ENCODE measurements at regions of chr2 and their contacts with region 1.

Region 1: DNA sequence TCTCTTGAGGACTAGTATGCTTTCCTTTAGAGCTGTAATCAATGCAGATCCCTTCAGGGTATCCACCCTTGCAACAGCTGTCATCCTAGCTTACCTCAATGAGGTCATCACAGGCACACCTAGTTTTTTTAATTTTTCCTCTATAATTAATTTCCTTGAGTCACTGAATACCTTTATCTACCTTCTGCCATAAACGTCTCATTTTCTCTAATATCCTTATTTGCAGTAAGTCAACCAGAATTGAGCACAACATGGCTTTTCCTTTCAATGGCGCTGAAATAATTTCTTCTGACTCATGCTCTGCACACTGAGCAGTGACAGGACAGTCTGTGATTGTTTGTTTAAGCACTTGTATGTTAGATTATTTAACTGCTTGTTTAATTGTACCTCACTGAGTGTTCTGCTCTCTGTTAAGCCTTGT is 49.4 kb downstream of the ETAA1 start:
- DNase-seq: no peak
- H3K4me3 ChIP-seq: no peak overlapping the region
- H3K27ac ChIP-seq: no peak overlapping the region
- H3K4me1 ChIP-seq: no peaks in the 10 kb centered on the region
- H3K27me3 ChIP-seq: no peaks in the 10 kb centered on the region
- CTCF ChIP-seq: no peak

Region 2: GRCh38 chr2:67290451-67291290 is 155.8 kb before region 1 on chr2:
- intact Hi-C with region 1: loop called (anchors 5 kb)
- DNase-seq: no peak
- H3K4me3 ChIP-seq: no peak overlapping the region
- H3K27ac ChIP-seq: no peak overlapping the region
- H3K4me1 ChIP-seq: peaks cover 0 to 13% (median 2%) of the 10 kb centered on the region in 4 donors
- H3K27me3 ChIP-seq: no peaks in the 10 kb centered on the region
- CTCF ChIP-seq: no peak

Measured in tibial artery (tissue), 4 donors.